ENCODE measurements at regions of chr4 and their contacts with region 1.

Region 1: DNA sequence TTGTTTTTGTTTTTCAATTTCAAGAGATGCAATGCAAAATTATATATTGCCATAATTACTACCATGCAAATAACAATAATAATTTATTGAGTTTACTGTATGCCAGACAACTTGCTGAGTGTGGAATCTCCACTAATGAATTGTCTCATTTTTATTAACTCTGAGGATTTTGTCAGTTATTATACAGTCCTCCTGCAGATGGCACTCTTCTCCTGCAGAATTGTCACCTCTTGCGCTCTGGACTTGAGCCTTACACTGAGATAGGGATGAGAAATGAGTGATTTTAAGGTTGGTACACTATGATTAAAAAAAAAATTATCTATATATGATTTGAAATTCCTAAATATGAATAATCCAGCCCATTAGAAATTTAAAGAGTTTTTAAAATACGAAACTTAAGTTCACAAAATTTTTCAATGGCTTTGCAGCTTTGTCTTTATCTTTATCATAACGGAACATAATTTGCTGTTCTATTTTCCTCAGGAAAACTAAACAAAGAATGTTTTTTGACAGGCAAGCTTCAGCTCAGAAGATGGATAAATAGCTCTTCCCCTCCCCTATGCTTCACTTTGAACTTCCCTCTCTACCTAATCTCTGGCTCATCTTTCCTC is 12.7 kb upstream of the PAQR3 start:
- DNase-seq: no peak
- ATAC-seq: peak; percentile 53 to 90 (median 66)
- H3K4me3 ChIP-seq: no peak overlapping the region
- H3K27ac ChIP-seq: no peak overlapping the region
- H3K4me1 ChIP-seq: no peaks in the 10 kb centered on the region
- H3K27me3 ChIP-seq: peaks cover 0 to 2% (median 0%) of the 10 kb centered on the region in 3 donors
- CTCF ChIP-seq: peak; percentile 77

Region 2: DNA sequence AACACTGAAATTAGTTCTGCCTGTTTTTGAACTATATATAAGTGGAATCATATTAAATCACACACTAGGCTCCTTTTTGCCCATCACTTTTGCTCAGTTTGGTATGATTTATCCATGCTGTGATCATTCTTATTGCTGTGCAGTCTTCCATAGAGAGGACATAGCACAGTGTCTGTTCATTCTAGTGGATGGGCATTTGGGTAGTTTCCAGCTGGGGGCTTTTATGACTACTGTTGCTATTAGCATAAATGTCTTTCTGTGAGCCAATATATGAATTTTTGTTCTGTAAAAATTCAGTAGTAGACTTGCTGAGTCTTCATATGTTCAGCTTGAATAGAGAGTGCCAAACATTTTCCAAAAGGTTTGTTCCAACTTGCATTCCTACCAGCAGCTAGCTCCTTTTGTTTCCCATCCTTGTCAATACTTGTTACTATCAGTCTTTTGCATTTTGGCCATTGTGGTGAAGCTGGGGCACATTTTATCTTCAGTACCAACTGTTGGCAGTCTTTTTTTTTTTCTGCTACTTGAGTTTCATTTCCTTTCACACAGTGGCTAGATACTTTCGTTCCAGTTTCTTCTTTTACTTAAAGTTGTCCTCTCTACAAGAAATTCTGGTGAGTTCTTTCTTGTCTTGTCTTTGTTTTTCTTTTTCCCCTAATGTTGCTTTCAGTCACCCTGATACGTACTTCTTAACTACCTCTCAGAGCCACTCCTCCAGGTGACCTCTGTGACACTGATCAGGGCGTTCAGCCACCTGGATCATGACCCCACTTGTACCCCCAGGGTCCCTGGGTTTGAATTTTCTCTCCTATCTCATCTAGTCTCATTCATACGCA is 313.4 kb before region 1 on chr4:
- intact Hi-C with region 1: no loop called
- DNase-seq: no peak
- ATAC-seq: no peak
- H3K4me3 ChIP-seq: no peak overlapping the region
- H3K27ac ChIP-seq: no peak overlapping the region
- H3K4me1 ChIP-seq: no peaks in the 10 kb centered on the region
- H3K27me3 ChIP-seq: no peaks in the 10 kb centered on the region
- CTCF ChIP-seq: no peak

Region 3: GRCh38 chr4:79576429-79576753 is 624.4 kb after region 1 on chr4:
- intact Hi-C with region 1: loop called in 1 of 2 experiments (anchors 10 kb)
- DNase-seq: no peak
- ATAC-seq: peak in 1 of 4 donors; percentile 56
- H3K4me3 ChIP-seq: no peak overlapping the region
- H3K27ac ChIP-seq: no peak overlapping the region
- H3K4me1 ChIP-seq: no peaks in the 10 kb centered on the region
- H3K27me3 ChIP-seq: no peaks in the 10 kb centered on the region
- CTCF ChIP-seq: peak; percentile 15

Region 4: DNA sequence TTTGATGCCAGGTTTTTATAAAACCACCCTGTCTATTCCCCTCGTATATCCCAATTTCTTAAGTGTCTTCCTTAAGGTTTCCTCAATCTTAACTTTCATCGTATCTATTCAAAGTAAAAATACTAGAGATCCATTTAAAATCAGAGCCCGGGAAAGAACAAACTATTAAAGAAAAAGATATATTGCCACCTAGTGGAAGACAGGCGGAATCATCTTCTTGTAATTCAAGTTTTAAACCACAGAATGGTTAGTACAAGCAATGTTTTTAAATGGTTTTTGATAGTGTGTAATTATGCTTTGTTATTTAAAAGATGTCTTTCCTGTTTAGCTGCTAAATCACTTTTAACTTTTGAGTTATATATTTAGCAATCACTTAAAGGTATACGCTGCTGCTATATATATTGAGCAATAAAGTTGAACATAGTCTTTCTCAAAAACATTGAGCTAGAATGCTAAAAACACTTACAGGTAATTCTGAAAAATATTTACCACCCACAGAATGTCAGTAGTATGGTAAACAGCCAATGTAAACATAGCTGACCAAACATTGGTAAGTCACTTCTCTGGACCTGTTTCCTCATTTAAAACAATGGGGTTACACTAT is 1263.6 kb after region 1 on chr4:
- intact Hi-C with region 1: loop called in 1 of 2 experiments (anchors 5 kb)
- DNase-seq: no peak
- ATAC-seq: no peak
- H3K4me3 ChIP-seq: no peak overlapping the region
- H3K27ac ChIP-seq: no peak overlapping the region
- H3K4me1 ChIP-seq: no peaks in the 10 kb centered on the region
- H3K27me3 ChIP-seq: no peaks in the 10 kb centered on the region
- CTCF ChIP-seq: peak; percentile 70

Measured in psoas muscle (tissue), 8 donors.